Endothelial cell of umbilical vein (primary cell): ENCODE measurements at regions of chr17 and their contacts with region 1.

Region 1: GRCh38 chr17:32783602-32784001 is 93.3 kb downstream of the MYO1D start:
- DNase-seq: peak; percentile 75
- H3K4me3 ChIP-seq: no peak overlapping the region
- H3K27ac ChIP-seq: no peak overlapping the region
- H3K4me1 ChIP-seq: peaks cover 4% of the 10 kb centered on the region
- H3K27me3 ChIP-seq: no peaks in the 10 kb centered on the region
- CTCF ChIP-seq: peak; percentile 37 to 53
- POLR2A ChIP-seq: no peak

Region 2: GRCh38 chr17:32794533-32795246 is 11.1 kb after region 1 on chr17:
- CTCF ChIA-PET with region 1: interaction called, 41 read pairs
- POLR2A ChIA-PET with region 1: no interaction called
- dilution Hi-C with region 1: no loop called
- intact Hi-C with region 1: no loop called
- DNase-seq: peak; percentile 39
- H3K4me3 ChIP-seq: no peak overlapping the region
- H3K27ac ChIP-seq: peak overlapping the region; percentile 92
- H3K4me1 ChIP-seq: peaks cover 57% of the 10 kb centered on the region
- H3K27me3 ChIP-seq: no peaks in the 10 kb centered on the region
- CTCF ChIP-seq: no peak
- POLR2A ChIP-seq: no peak

Region 3: DNA sequence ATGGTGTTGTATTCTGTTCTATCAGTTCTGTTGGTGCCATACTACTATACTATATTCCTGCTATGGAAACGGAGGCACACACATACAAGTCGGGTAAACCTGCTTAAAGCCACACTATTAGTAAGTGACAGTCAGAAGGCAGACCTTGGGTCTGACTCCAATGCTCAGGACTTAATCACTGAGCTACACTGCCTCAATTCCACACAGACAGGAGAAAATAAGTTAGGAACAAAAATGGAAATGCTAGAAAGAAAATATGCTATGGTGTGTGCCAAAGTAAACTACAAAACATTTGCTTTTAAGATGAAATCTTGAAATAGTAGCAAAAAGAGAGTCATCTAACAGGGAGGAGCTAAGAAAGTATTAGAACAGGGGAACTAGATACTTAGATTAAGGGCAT is 45.2 kb after region 1 on chr17:
- CTCF ChIA-PET with region 1: interaction called, 13 read pairs
- POLR2A ChIA-PET with region 1: no interaction called
- dilution Hi-C with region 1: no loop called
- intact Hi-C with region 1: no loop called
- DNase-seq: no peak
- H3K4me3 ChIP-seq: no peak overlapping the region
- H3K27ac ChIP-seq: no peak overlapping the region
- H3K4me1 ChIP-seq: peaks cover 12% of the 10 kb centered on the region
- H3K27me3 ChIP-seq: no peaks in the 10 kb centered on the region
- CTCF ChIP-seq: no peak
- POLR2A ChIP-seq: no peak

Region 4: DNA sequence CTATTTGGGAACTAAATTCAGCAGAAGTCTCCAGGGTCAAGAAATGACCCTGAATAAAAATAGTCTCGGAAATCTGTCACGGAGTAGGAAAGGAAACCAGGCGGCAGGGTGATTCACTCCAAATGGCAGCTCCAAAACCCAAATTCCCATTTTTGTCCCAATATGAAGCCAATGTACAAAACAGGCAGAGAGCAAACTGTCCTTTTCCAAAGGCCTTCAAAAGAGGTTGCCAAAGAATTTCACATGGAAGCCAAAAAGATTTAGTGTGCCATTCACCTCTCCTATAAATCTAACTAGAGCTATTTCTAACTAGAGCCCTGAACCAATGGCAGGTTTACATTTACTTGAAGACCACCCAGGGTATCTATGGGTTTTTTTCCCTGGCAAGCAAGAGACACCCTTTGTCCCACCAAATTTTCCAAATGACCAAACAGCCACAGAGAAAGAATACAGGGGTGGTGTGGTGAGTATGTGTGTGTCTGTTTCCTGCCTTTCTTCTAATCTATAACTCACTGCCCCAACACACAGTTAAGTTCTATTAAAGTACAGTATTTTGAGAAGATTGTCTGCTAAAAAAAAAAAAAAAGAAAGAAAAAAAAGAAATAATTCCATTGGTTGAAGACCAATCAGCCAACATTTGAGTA is 86.5 kb after region 1 on chr17:
- CTCF ChIA-PET with region 1: interaction called, 420 read pairs
- POLR2A ChIA-PET with region 1: no interaction called
- dilution Hi-C with region 1: no loop called
- intact Hi-C with region 1: no loop called
- DNase-seq: peak; percentile 75
- H3K4me3 ChIP-seq: peak overlapping the region in 1 of 3 experiments; percentile 57
- H3K27ac ChIP-seq: peak overlapping the region; percentile 96
- H3K4me1 ChIP-seq: peaks cover 38% of the 10 kb centered on the region
- H3K27me3 ChIP-seq: no peaks in the 10 kb centered on the region
- CTCF ChIP-seq: no peak
- POLR2A ChIP-seq: no peak

Region 5: DNA sequence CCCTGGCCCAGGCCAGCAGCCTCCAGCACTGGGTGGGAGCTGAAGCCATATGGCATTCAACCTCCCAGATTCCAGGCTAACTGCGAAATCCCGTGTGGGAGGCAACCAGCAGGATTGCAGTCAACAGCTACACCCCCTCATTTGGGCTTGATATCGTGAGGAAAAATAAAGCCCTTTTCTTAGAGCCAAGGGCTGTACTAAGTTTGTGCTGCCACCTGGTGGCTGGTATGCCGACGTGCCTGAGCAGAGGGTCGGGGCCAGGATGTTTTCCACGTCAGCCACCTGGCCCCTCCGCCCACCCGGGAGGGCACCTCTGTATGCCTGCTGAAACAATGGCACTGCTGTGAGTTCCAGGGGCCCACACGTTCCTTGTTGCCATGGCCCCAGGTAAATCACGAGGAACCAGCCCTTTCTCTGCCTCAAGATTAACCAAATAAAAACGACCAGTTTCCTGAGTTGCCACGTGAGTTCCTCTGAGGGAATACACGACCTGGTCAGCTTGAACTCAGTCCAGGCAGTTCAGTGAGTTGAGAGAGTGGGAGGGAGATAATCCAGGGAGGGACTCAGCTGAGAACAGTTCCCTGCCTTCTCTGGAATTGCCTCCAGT is 153.4 kb after region 1 on chr17:
- CTCF ChIA-PET with region 1: interaction called, 58 read pairs
- POLR2A ChIA-PET with region 1: no interaction called
- dilution Hi-C with region 1: no loop called
- intact Hi-C with region 1: loop called (anchors 1 kb)
- DNase-seq: peak; percentile 90
- H3K4me3 ChIP-seq: no peak overlapping the region
- H3K27ac ChIP-seq: peak overlapping the region; percentile 61
- H3K4me1 ChIP-seq: peaks cover 10% of the 10 kb centered on the region
- H3K27me3 ChIP-seq: no peaks in the 10 kb centered on the region
- CTCF ChIP-seq: peak; percentile 88 to 89
- POLR2A ChIP-seq: no peak